K562 (cell line): ENCODE measurements at regions of chr6 and their contacts with region 1.

Region 1: DNA sequence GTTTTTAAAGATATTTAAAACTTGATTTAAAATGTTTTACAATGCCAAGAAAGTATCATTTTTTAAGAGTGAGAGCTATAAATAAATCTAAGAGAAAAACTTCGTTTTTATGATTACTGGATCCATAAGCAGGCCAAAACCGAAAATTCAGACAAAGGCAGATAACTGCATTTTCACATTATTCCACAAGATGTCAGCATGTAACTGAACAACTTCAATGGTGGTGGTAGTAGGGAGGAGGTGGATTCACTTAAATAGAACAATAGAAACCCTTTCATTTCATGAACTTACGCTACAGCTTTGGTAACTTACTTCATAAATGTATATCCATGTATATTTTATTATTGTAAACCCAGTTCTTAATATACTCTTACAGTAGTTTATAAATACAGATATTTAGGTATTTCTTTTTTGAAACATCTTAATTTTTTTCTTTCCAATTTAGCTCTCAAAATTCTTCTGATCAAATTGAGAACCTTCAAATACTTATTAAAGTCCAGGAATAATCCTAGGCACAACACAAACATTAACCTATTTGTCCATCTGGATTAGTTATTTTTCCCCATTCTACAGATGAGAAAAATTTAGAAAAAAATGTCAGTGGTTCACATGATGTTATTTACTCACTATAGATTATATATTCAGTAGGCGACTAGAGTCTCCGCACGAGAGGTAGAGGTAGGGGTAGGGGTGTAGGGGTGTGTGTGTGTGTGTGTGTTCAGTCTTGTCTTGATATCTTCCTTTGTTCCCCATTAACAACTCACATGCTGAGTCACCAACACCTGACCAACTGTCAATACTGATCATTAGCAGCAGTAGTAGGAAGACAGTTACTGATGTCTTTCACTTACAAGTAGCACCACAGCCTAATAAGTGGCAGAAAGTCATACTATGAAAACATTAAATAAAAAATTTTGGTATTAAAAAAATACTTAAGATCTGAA is 111.5 kb downstream of the ARHGAP18 start:
- DNase-seq: peak; percentile 52 to 75 (median 60)
- ATAC-seq: peak; percentile 91
- H3K4me3 ChIP-seq: no peak overlapping the region
- H3K27ac ChIP-seq: no peak overlapping the region
- H3K4me1 ChIP-seq: 0 out of 5 replicates have a peak, but pooled peaks cover 0 to 4% of the 10 kb centered on the region in 2 experiments
- H3K27me3 ChIP-seq: no peaks in the 10 kb centered on the region
- CTCF ChIP-seq: peak; percentile 70 to 91 (median 71); a peak in 5 of 6 replicates
- EP300 ChIP-seq: no peak
- POLR2A ChIP-seq: no peak
- RAD21 ChIP-seq: peak; percentile 97

Region 2: GRCh38 chr6:129672881-129673643 is 74.5 kb after region 1 on chr6:
- CTCF ChIA-PET with region 1: interaction called, 6 read pairs
- POLR2A ChIA-PET with region 1: no interaction called
- in situ Hi-C with region 1: no loop called
- intact Hi-C with region 1: loop called (anchors 2 kb)
- DNase-seq: no peak
- ATAC-seq: no peak
- H3K4me3 ChIP-seq: no peak overlapping the region
- H3K27ac ChIP-seq: no peak overlapping the region
- H3K4me1 ChIP-seq: peaks cover 30 to 54% of the 10 kb centered on the region in 2 experiments
- H3K27me3 ChIP-seq: no peaks in the 10 kb centered on the region
- CTCF ChIP-seq: no peak
- EP300 ChIP-seq: no peak
- POLR2A ChIP-seq: no peak
- RAD21 ChIP-seq: no peak

Region 3: DNA sequence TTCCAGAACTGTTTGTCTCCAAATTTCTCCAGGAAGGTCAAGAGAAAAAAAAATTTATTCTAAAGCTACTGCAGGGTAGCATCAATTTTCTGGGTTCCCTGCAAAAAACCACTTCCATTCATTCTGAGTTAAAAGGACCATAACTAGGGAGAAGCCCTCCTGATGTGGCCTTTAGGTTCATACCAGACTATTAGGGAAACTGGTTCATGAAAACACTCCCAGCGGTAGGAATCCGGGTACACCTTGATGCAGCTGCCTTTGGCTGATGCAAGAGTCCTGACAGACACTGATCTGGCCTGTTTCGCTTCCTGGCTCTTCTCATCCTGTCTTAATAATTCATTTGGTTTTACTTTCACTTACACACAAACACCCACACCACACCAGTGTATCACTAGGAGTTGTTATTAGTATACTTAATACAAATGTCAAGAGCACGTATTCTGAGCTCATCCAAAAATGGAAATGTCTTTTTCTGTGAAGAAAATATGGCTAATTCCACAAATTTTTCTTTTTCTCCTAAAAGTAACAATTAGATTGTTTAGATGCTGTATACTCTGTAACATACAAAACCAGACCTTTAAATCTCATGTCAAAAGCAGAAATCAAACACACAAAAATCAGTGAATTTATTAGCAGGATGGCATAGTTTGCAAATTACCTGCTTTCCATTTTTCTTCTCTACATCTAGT is 149.8 kb after region 1 on chr6:
- CTCF ChIA-PET with region 1: no interaction called
- POLR2A ChIA-PET with region 1: no interaction called
- in situ Hi-C with region 1: loop called (anchors 10 kb)
- intact Hi-C with region 1: no loop called
- DNase-seq: peak; percentile 13 to 71 (median 30)
- ATAC-seq: peak; percentile 90
- H3K4me3 ChIP-seq: no peak overlapping the region
- H3K27ac ChIP-seq: peak overlapping the region; percentile 18
- H3K4me1 ChIP-seq: peaks cover 0 to 42% of the 10 kb centered on the region in 2 experiments; a peak in 4 of 5 replicates
- H3K27me3 ChIP-seq: no peaks in the 10 kb centered on the region
- CTCF ChIP-seq: peak in 1 of 3 experiments; percentile 13; a peak in 1 of 6 replicates
- EP300 ChIP-seq: peak; percentile 87
- POLR2A ChIP-seq: no peak
- RAD21 ChIP-seq: peak; percentile 29 to 32

Region 4: DNA sequence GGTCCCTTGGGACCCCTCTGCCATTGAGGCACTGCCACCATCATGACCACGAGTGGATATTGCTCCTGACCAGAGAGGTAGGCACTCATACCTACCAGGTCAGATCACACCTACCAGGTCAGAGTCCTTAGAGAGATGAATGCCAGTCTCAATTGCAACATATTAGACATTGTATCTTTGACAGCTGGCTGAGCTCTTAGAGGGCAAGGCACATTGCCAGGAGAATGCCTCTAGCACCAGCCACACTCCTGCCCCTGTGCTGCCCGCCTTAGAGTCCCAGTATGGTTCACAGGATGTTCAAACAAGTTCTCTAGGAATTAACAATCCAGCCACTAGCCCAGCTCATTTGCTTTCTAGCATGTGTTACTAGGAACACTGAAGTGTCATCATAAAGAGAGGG is 196.7 kb after region 1 on chr6:
- CTCF ChIA-PET with region 1: no interaction called
- POLR2A ChIA-PET with region 1: no interaction called
- in situ Hi-C with region 1: no loop called
- intact Hi-C with region 1: no loop called
- DNase-seq: no peak
- ATAC-seq: no peak
- H3K4me3 ChIP-seq: no peak overlapping the region
- H3K27ac ChIP-seq: no peak overlapping the region
- H3K4me1 ChIP-seq: no peaks in the 10 kb centered on the region; a peak in 1 of 5 replicates
- H3K27me3 ChIP-seq: no peaks in the 10 kb centered on the region; a peak in 1 of 5 replicates
- CTCF ChIP-seq: no peak
- EP300 ChIP-seq: no peak
- POLR2A ChIP-seq: no peak
- RAD21 ChIP-seq: no peak

Region 5: GRCh38 chr6:129863664-129864063 is 265.1 kb after region 1 on chr6:
- CTCF ChIA-PET with region 1: interaction called, 20 read pairs
- POLR2A ChIA-PET with region 1: no interaction called
- in situ Hi-C with region 1: no loop called
- intact Hi-C with region 1: loop called (anchors 1 kb)
- DNase-seq: no peak
- ATAC-seq: no peak
- H3K4me3 ChIP-seq: no peak overlapping the region
- H3K27ac ChIP-seq: no peak overlapping the region
- H3K4me1 ChIP-seq: no peaks in the 10 kb centered on the region
- H3K27me3 ChIP-seq: no peaks in the 10 kb centered on the region
- CTCF ChIP-seq: no peak
- EP300 ChIP-seq: no peak
- POLR2A ChIP-seq: no peak
- RAD21 ChIP-seq: no peak

Region 6: DNA sequence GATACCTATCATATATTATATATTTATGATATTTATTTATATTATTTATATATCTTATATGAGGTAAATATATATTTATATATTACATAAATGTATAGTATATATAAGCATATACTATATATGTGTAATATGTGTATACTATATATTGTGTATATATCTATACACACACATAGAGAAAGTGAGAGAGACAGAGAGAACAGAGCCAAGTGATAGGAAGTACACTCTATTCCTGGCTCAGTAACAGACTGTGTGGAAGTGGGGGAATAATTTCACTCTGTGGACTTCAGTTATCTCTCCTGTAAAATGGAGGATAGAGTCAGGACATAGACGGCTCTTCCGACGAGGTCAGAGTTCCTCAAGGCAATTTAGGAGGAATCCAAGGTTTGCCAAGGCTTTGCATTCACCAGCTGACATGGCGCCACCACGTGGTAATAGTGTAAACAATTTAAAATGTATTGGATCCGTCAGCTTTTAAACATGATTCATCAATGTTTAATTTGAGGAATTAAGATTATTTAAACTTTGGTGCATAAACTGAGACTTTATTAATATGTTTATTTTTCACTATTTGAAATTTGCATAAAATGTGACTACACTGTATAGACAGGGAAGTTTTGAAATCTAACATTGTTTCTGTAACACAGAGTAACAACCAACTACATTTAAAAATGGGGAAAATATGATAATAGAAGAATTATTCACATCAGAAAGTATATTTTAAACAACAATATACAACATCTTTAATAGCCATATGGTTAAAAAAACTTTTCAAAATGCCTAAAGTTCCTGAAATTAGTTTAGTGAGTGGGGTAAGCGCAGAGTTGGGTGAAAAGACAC is 338.0 kb after region 1 on chr6:
- CTCF ChIA-PET with region 1: interaction called, 8 read pairs
- POLR2A ChIA-PET with region 1: interaction called, 3 read pairs
- in situ Hi-C with region 1: loop called (anchors 10 kb)
- intact Hi-C with region 1: loop called (anchors 2 kb)
- DNase-seq: peak; percentile 17 to 83 (median 24)
- ATAC-seq: peak; percentile 92
- H3K4me3 ChIP-seq: no peak overlapping the region
- H3K27ac ChIP-seq: no peak overlapping the region
- H3K4me1 ChIP-seq: no peaks in the 10 kb centered on the region; a peak in 1 of 5 replicates
- H3K27me3 ChIP-seq: no peaks in the 10 kb centered on the region; a peak in 1 of 5 replicates
- CTCF ChIP-seq: peak; percentile 64 to 78 (median 72)
- EP300 ChIP-seq: no peak
- POLR2A ChIP-seq: no peak
- RAD21 ChIP-seq: peak; percentile 77 to 82

Region 7: DNA sequence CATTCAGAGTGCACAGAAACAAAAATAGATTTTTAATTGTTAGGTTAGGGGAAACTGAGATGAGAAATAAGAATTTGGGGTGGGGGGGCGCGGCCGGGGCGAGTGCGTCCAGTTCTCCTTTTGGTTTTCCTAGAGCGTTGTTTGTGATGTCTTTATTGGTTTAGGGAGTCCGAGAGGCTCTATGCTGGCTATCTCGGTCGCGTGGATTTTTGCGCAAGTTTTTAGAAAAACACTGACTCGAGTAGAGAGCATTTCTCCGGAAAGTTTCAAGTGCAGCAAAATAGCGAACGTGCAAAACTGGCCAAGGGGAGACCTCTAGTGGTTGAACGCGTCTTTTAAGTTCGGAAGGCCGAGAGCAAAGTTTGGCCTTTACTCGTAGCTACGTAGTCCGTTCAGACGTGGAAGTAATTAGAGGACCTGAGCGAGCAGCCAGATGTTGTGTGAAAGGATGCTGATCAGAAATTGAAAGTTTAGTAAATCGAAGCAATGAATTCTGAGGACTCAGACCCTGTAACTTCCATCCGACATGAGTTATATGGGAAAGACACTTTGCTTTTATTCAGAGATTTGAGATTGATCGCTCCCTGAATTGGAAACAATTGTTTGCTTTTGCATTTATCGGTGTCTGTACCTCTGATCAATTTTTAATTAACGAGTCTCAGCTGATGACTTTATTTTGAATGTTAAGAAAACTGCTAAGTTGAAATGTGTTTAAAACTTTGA is 422.6 kb after region 1 on chr6:
- CTCF ChIA-PET with region 1: interaction called, 8 read pairs
- POLR2A ChIA-PET with region 1: no interaction called
- in situ Hi-C with region 1: loop called (anchors 25 kb)
- intact Hi-C with region 1: loop called (anchors 2 kb)
- DNase-seq: peak; percentile 55 to 90 (median 57)
- ATAC-seq: peak; percentile 83
- H3K4me3 ChIP-seq: peak overlapping the region; percentile 60
- H3K27ac ChIP-seq: peak overlapping the region; percentile 62; the same call in 1 of the 3 replicates
- H3K4me1 ChIP-seq: peaks cover 0 to 15% of the 10 kb centered on the region in 2 experiments; a peak in 2 of 5 replicates
- H3K27me3 ChIP-seq: no peaks in the 10 kb centered on the region
- CTCF ChIP-seq: peak; percentile 77 to 92 (median 86)
- EP300 ChIP-seq: no peak
- POLR2A ChIP-seq: no peak
- RAD21 ChIP-seq: peak; percentile 87 to 88